Motor neuron (in vitro differentiated cells): ENCODE measurements at regions of chr6 and their contacts with region 1.

Region 1: GRCh38 chr6:109059571-109060021 is 35.0 kb downstream of the SESN1 start:
- ATAC-seq: peak in 4 of 8 experiments; percentile 34 to 62 (median 58)
- H3K4me3 ChIP-seq: no peak overlapping the region
- H3K27ac ChIP-seq: no peak overlapping the region
- H3K4me1 ChIP-seq: peaks cover 15 to 20% of the 10 kb centered on the region in 2 donors

Region 2: DNA sequence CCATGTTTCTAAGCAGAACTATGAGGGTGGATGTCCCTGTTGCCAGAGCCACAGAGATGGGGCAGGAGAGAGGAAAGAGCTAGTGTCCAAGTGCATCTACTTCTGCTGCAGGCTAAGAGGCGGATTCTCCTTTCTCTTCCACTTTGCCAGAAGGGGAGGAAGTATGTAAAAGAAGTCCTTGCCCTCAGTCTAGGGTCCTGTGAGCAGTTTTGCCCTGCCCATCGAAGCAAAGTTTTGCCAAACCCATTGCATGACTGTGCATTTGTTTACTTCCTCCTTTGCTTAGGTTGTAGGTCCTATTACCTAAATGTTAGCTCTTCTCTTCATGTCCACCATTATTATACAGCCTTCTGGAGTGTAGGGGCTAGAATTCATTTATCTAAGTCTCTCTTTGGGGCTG is 317.6 kb before region 1 on chr6:
- in situ Hi-C with region 1: no loop called
- ATAC-seq: peak in 2 of 8 experiments; percentile 30 to 67
- H3K4me3 ChIP-seq: no peak overlapping the region
- H3K27ac ChIP-seq: no peak overlapping the region
- H3K4me1 ChIP-seq: peaks cover 0 to 8% of the 10 kb centered on the region in 2 donors

Region 3: GRCh38 chr6:108896111-108896661 is 163.4 kb before region 1 on chr6:
- in situ Hi-C with region 1: loop called in 2 of 9 experiments (anchors 10 to 25 kb)
- ATAC-seq: peak in 1 of 8 experiments; percentile 10
- H3K4me3 ChIP-seq: no peak overlapping the region
- H3K27ac ChIP-seq: no peak overlapping the region
- H3K4me1 ChIP-seq: no peaks in the 10 kb centered on the region

Region 4: GRCh38 chr6:110226261-110226660 is 1166.7 kb after region 1 on chr6:
- in situ Hi-C with region 1: no loop called
- ATAC-seq: no peak
- H3K4me3 ChIP-seq: no peak overlapping the region
- H3K27ac ChIP-seq: no peak overlapping the region
- H3K4me1 ChIP-seq: no peaks in the 10 kb centered on the region